CD4-positive, alpha-beta T cell (primary cell): ENCODE measurements at regions of chr1 and their contacts with region 1.

Region 1: DNA sequence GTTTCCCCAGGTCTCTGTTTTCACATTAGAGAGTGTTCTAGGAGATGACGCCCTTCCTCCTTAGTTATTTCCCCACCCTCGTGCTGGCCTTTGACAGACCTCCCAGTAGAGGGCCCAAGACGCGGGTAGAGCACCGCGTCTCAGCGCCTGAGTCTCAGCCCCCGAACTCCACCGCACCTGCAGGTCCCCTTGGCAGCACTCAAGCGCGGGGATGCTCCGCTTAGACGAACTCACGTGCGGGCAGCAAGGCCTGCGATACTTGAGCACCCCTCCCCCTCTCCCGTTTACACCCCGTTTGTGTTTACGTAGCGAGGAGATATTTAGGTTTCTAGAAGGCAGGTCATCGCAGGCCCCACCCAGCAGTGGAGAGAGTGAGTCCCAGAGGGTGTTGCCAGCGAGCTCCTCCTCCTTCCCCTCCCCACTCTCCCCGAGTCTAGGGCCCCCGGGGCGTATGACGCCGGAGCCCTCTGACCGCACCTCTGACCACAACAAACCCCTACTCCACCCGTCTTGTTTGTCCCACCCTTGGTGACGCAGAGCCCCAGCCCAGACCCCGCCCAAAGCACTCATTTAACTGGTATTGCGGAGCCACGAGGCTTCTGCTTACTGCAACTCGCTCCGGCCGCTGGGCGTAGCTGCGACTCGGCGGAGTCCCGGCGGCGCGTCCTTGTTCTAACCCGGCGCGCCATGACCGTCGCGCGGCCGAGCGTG is at the start of gene CD55:
- DNase-seq: peak; percentile 95 to 100 (median 98)
- ATAC-seq: peak; percentile 89
- H3K4me3 ChIP-seq: peak within 1 kb of the TSS; percentile 98
- H3K4me3 Mint-ChIP-seq: peak within 1 kb of the TSS; percentile 94
- H3K27ac ChIP-seq: peak within 1 kb of the TSS; percentile 92 to 96
- H3K27ac Mint-ChIP-seq: peak within 1 kb of the TSS; percentile 97
- H3K4me1 ChIP-seq: peaks cover 24% of the 10 kb centered on the region
- H3K4me1 Mint-ChIP-seq: peaks cover 45% of the 10 kb centered on the region
- H3K27me3 ChIP-seq: no peaks in the 10 kb centered on the region
- H3K27me3 Mint-ChIP-seq: no peaks in the 10 kb centered on the region
- CTCF ChIP-seq: no peak
- total RNA-seq, gene CD55: 218 to 229 TPM

Region 2: GRCh38 chr1:207084701-207085180 is 236.5 kb before region 1 on chr1:
- CTCF ChIA-PET with region 1: interaction called, 4 read pairs
- POLR2A ChIA-PET with region 1: interaction called, 7 read pairs
- intact Hi-C with region 1: loop called in 1 of 2 experiments (anchors 10 kb)
- DNase-seq: peak; percentile 19 to 83 (median 40)
- ATAC-seq: peak; percentile 77
- H3K4me3 ChIP-seq: no peak overlapping the region
- H3K4me3 Mint-ChIP-seq: no peak overlapping the region
- H3K27ac ChIP-seq: no peak overlapping the region
- H3K27ac Mint-ChIP-seq: no peak overlapping the region
- H3K4me1 ChIP-seq: peaks cover 10% of the 10 kb centered on the region
- H3K4me1 Mint-ChIP-seq: peaks cover 21% of the 10 kb centered on the region
- H3K27me3 ChIP-seq: no peaks in the 10 kb centered on the region
- H3K27me3 Mint-ChIP-seq: peaks cover 35% of the 10 kb centered on the region
- CTCF ChIP-seq: peak; percentile 68

Region 3: GRCh38 chr1:207152792-207153434 is 168.3 kb before region 1 on chr1:
- CTCF ChIA-PET with region 1: no interaction called
- POLR2A ChIA-PET with region 1: no interaction called
- intact Hi-C with region 1: no loop called
- DNase-seq: no peak
- ATAC-seq: no peak
- H3K4me3 ChIP-seq: no peak overlapping the region
- H3K4me3 Mint-ChIP-seq: no peak overlapping the region
- H3K27ac ChIP-seq: no peak overlapping the region
- H3K27ac Mint-ChIP-seq: no peak overlapping the region
- H3K4me1 ChIP-seq: no peaks in the 10 kb centered on the region
- H3K4me1 Mint-ChIP-seq: no peaks in the 10 kb centered on the region
- H3K27me3 ChIP-seq: peaks cover 0 to 4% of the 10 kb centered on the region in 2 experiments
- H3K27me3 Mint-ChIP-seq: peaks cover 8% of the 10 kb centered on the region
- CTCF ChIP-seq: no peak

Region 4: GRCh38 chr1:207243756-207244408 is 77.4 kb before region 1 on chr1:
- CTCF ChIA-PET with region 1: no interaction called
- POLR2A ChIA-PET with region 1: interaction called, 10 read pairs
- intact Hi-C with region 1: no loop called
- DNase-seq: no peak
- ATAC-seq: no peak
- H3K4me3 ChIP-seq: no peak overlapping the region
- H3K4me3 Mint-ChIP-seq: no peak overlapping the region
- H3K27ac ChIP-seq: no peak overlapping the region
- H3K27ac Mint-ChIP-seq: no peak overlapping the region
- H3K4me1 ChIP-seq: no peaks in the 10 kb centered on the region
- H3K4me1 Mint-ChIP-seq: peaks cover 8% of the 10 kb centered on the region
- H3K27me3 ChIP-seq: no peaks in the 10 kb centered on the region
- H3K27me3 Mint-ChIP-seq: no peaks in the 10 kb centered on the region
- CTCF ChIP-seq: no peak

Region 5: DNA sequence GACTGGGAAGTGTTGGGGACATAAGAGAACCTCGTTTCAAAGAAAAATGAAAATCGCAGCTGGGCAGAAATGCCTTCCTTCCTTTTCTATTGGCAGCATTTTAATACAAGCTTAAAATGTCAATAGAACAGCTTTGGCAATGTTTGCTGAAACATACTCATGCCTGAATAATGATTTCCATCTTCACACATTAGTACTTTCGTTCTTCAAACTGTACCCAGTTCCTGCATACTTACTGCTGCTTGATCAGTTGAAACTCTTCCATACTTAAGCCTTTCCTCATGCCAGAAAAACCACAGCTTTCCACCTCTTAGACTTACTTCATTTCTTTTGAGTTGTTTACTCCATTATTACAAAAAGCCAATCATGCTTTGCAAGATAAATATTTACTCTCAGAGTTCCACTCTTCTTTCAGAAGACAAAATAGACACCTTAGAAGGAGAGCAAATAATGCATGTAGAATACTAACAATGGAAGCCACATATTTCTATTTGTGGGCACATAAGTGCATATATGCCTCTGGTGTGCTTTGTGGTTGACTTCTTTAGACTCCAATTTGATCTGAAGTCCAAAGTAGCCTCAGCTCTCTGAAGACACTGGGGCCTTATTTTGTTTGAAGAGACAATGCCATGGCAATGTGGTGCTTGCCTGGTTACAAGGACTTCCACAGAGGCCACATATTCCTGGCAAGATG is 22.4 kb before region 1 on chr1:
- CTCF ChIA-PET with region 1: no interaction called
- POLR2A ChIA-PET with region 1: interaction called, 18 read pairs
- intact Hi-C with region 1: no loop called
- DNase-seq: no peak
- ATAC-seq: no peak
- H3K4me3 ChIP-seq: no peak overlapping the region
- H3K4me3 Mint-ChIP-seq: no peak overlapping the region
- H3K27ac ChIP-seq: no peak overlapping the region
- H3K27ac Mint-ChIP-seq: no peak overlapping the region
- H3K4me1 ChIP-seq: no peaks in the 10 kb centered on the region
- H3K4me1 Mint-ChIP-seq: peaks cover 20% of the 10 kb centered on the region
- H3K27me3 ChIP-seq: no peaks in the 10 kb centered on the region
- H3K27me3 Mint-ChIP-seq: no peaks in the 10 kb centered on the region
- CTCF ChIP-seq: no peak

Region 6: GRCh38 chr1:207362962-207363858 is 42.0 kb after region 1 on chr1:
- CTCF ChIA-PET with region 1: interaction called, 4 read pairs
- POLR2A ChIA-PET with region 1: interaction called, 11 read pairs
- intact Hi-C with region 1: loop called in 1 of 2 experiments (anchors 5 kb)
- DNase-seq: peak in 3 of 14 experiments; percentile 35 to 63 (median 59)
- ATAC-seq: peak; percentile 84
- H3K4me3 ChIP-seq: no peak overlapping the region
- H3K4me3 Mint-ChIP-seq: no peak overlapping the region
- H3K27ac ChIP-seq: no peak overlapping the region
- H3K27ac Mint-ChIP-seq: no peak overlapping the region
- H3K4me1 ChIP-seq: peaks cover 4% of the 10 kb centered on the region
- H3K4me1 Mint-ChIP-seq: no peaks in the 10 kb centered on the region
- H3K27me3 ChIP-seq: no peaks in the 10 kb centered on the region
- H3K27me3 Mint-ChIP-seq: no peaks in the 10 kb centered on the region
- CTCF ChIP-seq: no peak